ENCODE measurements at regions of chr6 and their contacts with region 1.

Region 1: DNA sequence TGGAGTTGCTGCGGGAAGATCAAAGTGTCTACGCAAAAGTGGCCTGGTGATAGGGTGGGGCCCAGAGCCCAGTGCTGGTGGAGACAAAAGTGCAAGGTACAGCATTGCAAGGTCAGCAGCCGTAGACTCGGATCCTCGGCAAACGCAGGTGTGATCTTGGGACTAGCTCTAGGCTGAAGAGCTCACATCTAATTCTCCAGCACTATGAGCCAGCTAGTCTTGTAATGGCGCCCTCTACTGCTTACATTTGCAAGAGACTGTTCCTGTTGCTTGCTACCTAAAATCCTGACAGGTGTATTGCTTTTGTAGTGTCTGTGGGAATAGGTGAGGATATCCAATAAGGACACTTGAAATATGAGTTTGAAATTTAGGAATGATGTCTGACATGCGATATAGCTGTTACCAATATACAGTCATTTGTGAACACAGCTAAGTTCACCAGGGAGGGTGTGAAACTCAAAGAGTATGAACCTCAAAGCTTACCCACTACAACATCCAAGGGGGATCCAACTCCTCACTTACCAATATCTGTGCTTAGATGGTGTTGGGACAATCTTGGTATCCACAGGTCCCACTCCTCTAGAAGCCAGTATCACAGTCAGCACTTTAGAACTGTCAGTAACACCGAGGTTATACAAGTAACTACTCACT is 58.4 kb downstream of the PDE7B start:
- DNase-seq: peak; percentile 66
- CTCF ChIP-seq: peak; percentile 79

Region 2: GRCh38 chr6:135535989-135536414 is 373.9 kb before region 1 on chr6:
- in situ Hi-C with region 1: loop called (anchors 25 kb)
- DNase-seq: peak; percentile 21
- CTCF ChIP-seq: peak; percentile 61

Region 3: DNA sequence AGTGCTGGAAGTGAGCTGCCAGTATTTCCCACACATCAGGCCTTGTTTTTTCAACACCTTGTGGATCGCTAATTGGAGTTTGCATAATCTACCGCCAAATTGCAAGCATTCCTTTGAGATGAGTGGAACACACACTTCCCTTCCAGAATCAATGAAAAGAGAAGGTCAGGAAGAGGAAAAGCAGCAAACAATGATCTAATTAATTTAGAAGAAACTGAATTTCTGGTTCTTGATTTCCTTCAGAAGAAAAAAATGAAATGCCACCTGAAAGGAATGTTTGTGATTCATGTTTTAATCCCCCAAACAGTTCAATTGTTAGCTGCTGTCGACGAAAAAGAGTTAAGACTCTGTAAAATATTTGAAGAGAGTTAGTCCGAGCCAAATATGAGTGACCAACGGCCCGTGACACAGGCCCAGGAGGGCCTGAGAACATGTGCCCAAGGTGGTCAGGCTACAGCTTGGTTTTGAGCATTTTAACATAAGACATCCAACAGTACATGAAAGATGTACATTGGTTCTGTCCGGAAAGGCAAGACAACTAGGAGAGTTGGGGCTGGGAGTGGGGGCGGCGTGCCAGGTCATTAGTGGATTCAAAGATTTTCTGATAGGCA is 158.0 kb after region 1 on chr6:
- in situ Hi-C with region 1: no loop called
- DNase-seq: no peak
- CTCF ChIP-seq: no peak

Measured in GM13977 (cell line).